Heart right ventricle (tissue), 16 donors: ENCODE measurements at regions of chr12 and their contacts with region 1.

Region 1: DNA sequence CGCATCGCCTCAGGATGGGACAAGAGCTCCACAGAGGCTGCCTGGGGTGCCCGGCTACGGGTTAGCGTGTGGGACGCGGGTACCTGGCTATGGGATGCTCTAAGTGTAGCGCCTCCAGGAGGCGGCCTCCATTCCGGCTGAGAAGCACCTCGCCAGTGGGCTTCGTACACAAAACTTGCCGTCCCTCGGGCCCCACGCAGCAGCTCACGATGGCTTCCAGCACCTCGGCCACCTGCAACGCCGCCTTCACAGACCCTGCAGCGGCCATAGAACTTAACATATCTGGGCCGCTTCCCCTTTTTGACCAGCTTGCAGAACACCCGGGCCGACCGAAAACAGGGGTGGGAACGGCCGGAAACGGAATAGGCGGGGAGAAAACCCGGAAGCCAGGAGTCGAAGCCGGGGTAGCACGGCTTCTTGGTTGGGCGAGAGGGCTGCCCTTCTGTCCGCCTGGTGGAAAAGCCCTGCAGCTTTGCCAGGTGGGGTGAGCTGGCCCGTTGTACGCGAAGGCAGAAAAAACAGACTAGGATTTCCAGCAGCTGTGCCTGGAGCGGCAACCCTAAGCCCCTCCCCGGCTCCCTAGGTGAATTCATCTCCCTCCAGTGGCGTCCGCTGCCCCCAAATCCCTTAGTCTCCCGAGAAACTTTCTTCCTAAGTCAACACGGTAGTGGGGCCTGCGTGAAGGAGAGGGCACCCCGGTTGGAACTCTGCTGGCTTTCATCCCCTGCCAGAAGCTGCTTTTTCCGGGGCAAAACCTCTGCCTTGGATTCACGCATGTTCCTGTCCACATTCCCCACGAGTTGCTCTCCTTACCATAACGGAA is at the start of gene BBS10:
- DNase-seq: peak; percentile 90 to 94
- ATAC-seq: peak; percentile 97 to 99 (median 98)
- H3K4me3 ChIP-seq: peak within 1 kb of the TSS; percentile 48 to 96 (median 80)
- H3K27ac ChIP-seq: peak within 1 kb of the TSS; percentile 55 to 93 (median 89)
- H3K4me1 ChIP-seq: peaks cover 0 to 40% (median 30%) of the 10 kb centered on the region in 9 donors
- H3K27me3 ChIP-seq: no peaks in the 10 kb centered on the region
- CTCF ChIP-seq: peak in 6 of 9 donors; percentile 29 to 64 (median 47)
- total RNA-seq, gene BBS10: 5.6 to 11.0 (median 9.0) TPM

Region 2: DNA sequence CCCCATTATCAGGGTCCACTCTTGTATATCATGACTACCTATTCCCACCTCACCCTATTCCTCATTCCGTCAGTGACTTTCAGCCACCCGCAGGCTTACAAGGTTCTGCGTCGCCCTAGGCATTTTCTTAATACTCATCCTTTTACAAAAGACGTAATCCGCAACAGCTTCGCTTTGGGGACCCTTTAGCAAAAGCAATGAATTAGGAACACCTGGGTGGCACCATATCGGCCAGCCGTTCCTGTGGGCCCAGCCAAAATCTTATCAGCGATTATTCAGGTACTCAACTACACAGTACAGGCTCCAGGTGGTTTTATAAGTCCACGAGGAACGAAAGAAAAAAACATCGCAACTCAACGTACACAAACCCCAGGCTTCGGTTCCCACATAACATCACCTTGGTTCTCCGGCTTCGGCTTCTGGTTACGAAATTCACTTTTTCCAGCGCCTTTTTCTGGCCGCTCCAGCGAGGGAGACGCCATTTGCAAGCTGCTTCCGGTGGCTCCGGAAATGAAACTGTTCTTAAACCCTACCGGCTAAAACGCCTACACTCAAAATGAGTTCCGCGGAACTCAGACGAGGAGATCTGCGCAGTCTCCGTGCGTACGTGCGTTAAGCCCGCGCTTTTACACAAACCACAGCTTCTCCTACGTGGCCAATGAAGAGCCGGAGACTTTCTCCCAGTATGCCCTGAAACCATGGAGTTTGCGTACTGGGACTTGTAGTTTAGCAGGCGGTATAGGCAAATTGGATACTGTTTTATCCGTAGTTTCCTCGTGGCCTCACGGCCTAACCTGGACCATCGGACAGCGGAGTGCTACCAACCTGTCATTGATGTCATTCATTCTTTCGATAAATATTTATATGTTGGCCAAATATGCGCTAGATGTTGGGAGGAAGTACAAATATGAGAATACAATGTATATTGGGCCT is 836.9 kb before region 1 on chr12 and contains the start of gene KRR1:
- intact Hi-C with region 1: loop called in 2 of 10 experiments (anchors 5 to 10 kb)
- DNase-seq: peak; percentile 84 to 95
- ATAC-seq: peak; percentile 99 to 100 (median 100)
- H3K4me3 ChIP-seq: peak within 1 kb of the TSS; percentile 72 to 98 (median 78)
- H3K27ac ChIP-seq: peak within 1 kb of the TSS in 9 of 10 donors; percentile 46 to 85 (median 73)
- H3K4me1 ChIP-seq: peaks cover 0 to 32% (median 28%) of the 10 kb centered on the region in 9 donors
- H3K27me3 ChIP-seq: no peaks in the 10 kb centered on the region
- CTCF ChIP-seq: peak in 1 of 9 donors; percentile 23
- total RNA-seq, gene KRR1: 29.2 to 44.2 (median 33.1) TPM

Region 3: DNA sequence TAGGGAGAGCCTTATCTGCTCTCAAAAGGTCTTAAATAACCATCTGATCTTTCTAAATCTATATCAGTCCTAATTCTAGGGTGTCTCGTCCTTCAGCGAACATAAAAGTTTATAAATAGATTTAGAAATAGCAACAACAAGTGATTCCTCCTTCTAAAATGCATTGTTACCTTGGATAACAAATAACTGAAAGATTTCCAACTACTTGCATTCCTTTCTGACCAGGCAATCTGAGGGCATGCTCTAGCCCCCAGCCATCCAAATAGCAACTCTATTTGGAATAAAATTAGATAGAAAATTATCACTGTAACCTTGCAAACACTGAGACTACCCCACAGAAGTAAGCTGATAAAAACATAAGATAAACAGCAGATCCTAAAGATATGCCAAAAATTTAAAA is 815.1 kb before region 1 on chr12:
- intact Hi-C with region 1: loop called in 3 of 10 experiments (anchors 5 to 10 kb)
- DNase-seq: no peak
- ATAC-seq: no peak
- H3K4me3 ChIP-seq: no peak overlapping the region
- H3K27ac ChIP-seq: no peak overlapping the region
- H3K4me1 ChIP-seq: peaks cover 0 to 7% (median 0%) of the 10 kb centered on the region in 9 donors
- H3K27me3 ChIP-seq: peaks cover 0 to 4% (median 0%) of the 10 kb centered on the region in 7 donors
- CTCF ChIP-seq: no peak

Region 4: DNA sequence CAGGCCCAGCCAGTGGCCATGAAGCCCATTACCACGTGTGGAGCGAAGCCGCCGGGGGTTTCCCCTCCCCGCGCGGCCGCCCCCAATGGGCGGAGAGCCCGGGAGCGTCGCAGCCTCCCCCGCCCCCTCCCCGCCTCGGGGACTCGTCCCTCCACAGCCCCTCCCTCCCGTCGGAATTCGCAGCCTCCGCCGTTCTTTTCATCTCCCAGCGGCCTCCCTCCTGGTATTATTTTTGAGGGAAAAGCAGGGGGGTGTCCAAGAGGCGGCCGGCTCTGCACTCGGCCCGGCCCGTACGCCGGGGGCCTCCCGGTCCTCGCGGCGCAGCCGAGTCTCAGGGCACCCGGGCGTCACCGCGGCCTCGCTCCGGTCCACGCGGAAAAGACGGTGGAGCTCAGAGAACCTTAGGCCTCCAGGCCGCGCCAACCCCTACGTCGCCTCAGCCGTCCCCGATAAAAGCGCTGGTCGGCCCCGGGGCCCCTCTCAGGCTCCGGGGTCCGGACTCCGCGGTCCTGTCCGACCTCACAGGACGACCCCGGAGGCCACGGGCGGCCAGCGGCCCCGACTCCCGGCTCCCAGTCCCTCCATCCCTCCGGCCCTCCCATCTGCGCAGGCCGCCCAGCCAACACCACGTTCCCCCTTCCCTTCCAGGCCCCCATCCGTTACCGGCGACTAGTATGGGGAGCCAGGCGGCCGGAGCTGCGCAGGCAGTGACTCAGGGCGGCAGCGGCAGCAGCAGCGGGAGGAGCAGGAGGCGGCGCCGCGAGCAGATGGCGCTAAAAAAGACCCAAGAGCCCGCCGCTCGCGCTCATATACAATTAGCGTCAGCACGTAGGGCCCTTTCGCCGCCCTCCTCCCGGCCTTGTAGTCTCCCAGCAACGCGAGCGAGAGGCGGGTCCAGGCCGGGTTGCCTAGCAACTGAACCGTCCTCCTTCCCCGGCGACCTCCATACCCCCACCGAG is 264.1 kb before region 1 on chr12 and contains the start of gene NAP1L1:
- intact Hi-C with region 1: loop called in 8 of 10 experiments (anchors 2 to 10 kb)
- DNase-seq: peak; percentile 98
- ATAC-seq: peak; percentile 96 to 98 (median 96)
- H3K4me3 ChIP-seq: peak within 1 kb of the TSS; percentile 74 to 97 (median 88)
- H3K27ac ChIP-seq: peak within 1 kb of the TSS; percentile 95 to 100 (median 98)
- H3K4me1 ChIP-seq: peaks cover 0 to 50% (median 31%) of the 10 kb centered on the region in 9 donors
- H3K27me3 ChIP-seq: no peaks in the 10 kb centered on the region
- CTCF ChIP-seq: no peak
- total RNA-seq, gene NAP1L1: 224 to 363 (median 264) TPM

Region 5: GRCh38 chr12:76310110-76310509 is 38.2 kb before region 1 on chr12:
- intact Hi-C with region 1: no loop called
- DNase-seq: no peak
- ATAC-seq: no peak
- H3K4me3 ChIP-seq: no peak overlapping the region
- H3K27ac ChIP-seq: no peak overlapping the region
- H3K4me1 ChIP-seq: no peaks in the 10 kb centered on the region
- H3K27me3 ChIP-seq: peaks cover 0 to 13% (median 0%) of the 10 kb centered on the region in 7 donors
- CTCF ChIP-seq: no peak

Region 6: GRCh38 chr12:76374386-76375020 is 26.2 kb after region 1 on chr12:
- intact Hi-C with region 1: no loop called
- DNase-seq: no peak
- ATAC-seq: no peak
- H3K4me3 ChIP-seq: no peak overlapping the region
- H3K27ac ChIP-seq: no peak overlapping the region
- H3K4me1 ChIP-seq: no peaks in the 10 kb centered on the region
- H3K27me3 ChIP-seq: no peaks in the 10 kb centered on the region
- CTCF ChIP-seq: no peak

Region 7: GRCh38 chr12:76450690-76451089 is 102.4 kb after region 1 on chr12:
- intact Hi-C with region 1: loop called in 1 of 10 experiments (anchors 5 kb)
- DNase-seq: no peak
- ATAC-seq: no peak
- H3K4me3 ChIP-seq: no peak overlapping the region
- H3K27ac ChIP-seq: no peak overlapping the region
- H3K4me1 ChIP-seq: peaks cover 0 to 28% (median 4%) of the 10 kb centered on the region in 9 donors
- H3K27me3 ChIP-seq: no peaks in the 10 kb centered on the region
- CTCF ChIP-seq: no peak

Region 8: DNA sequence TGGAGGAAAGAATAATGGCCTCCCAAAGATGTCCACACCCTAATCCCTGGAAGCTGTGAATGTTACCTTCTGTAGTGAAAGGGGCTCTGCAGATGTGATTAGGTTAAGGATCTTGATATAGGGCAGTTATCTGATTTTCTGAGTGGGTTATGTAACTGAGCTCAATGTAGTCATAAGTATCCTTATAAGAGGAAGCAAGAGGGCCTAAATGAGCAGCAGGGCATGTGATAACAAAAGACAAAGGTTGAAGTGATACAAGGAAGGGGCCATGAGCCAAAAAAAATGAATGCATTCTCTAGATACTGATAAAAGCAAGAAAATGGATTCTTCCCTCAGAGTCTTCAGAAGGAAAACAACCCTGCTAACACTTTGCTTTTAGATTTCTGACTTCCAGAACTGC is 132.5 kb after region 1 on chr12:
- intact Hi-C with region 1: no loop called
- DNase-seq: no peak
- ATAC-seq: no peak
- H3K4me3 ChIP-seq: no peak overlapping the region
- H3K27ac ChIP-seq: no peak overlapping the region
- H3K4me1 ChIP-seq: peaks cover 0 to 8% (median 4%) of the 10 kb centered on the region in 9 donors
- H3K27me3 ChIP-seq: no peaks in the 10 kb centered on the region
- CTCF ChIP-seq: no peak